Transverse colon (tissue), 4 donors: ENCODE measurements at regions of chr1 and their contacts with region 1.

Region 1: GRCh38 chr1:56831871-56832693 is 12.9 kb upstream of the FYB2 start:
- DNase-seq: peak; percentile 61
- H3K4me3 ChIP-seq: no peak overlapping the region
- H3K27ac ChIP-seq: no peak overlapping the region
- H3K4me1 ChIP-seq: no peaks in the 10 kb centered on the region
- H3K27me3 ChIP-seq: peaks cover 16% of the 10 kb centered on the region
- CTCF ChIP-seq: peak; percentile 87 to 97 (median 97)
- EP300 ChIP-seq: no peak
- POLR2A ChIP-seq: no peak

Region 2: GRCh38 chr1:56798053-56798471 is 34.0 kb before region 1 on chr1:
- in situ Hi-C with region 1: no loop called
- intact Hi-C with region 1: no loop called
- DNase-seq: no peak
- H3K4me3 ChIP-seq: no peak overlapping the region
- H3K27ac ChIP-seq: peak overlapping the region in 2 of 4 donors; percentile 8 to 15
- H3K4me1 ChIP-seq: peaks cover 0 to 19% (median 9%) of the 10 kb centered on the region in 4 donors
- H3K27me3 ChIP-seq: no peaks in the 10 kb centered on the region
- CTCF ChIP-seq: no peak
- EP300 ChIP-seq: no peak
- POLR2A ChIP-seq: no peak

Region 3: DNA sequence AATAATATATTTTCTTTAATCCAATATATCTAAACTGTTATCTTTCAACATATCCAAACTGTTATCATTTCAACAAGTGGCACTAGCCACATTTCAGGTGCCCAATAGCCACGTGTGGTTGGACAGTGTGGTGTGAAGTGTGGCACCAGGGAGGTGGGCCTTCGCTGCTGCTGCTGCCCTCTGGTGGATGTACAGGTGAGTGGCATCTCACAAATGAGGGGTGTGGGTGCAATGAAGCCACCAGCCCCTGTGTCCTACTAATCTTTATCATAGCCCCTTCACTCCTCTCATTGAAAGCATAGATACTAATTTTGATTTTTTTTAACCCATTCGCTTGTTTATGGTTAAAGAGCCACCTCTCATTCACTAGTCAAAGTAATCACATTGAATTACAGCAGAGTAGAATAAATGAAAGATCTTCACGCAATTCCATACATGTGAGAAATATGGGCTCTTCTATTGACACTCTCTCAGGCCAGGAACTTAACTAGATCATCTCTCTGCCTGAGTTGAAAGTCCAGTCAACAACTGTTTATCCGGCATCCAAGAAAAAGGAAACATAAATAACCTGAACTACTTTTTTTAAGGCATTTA is 1215.3 kb after region 1 on chr1:
- in situ Hi-C with region 1: loop called in 2 of 4 experiments (anchors 25 kb)
- intact Hi-C with region 1: loop called (anchors 10 kb)
- DNase-seq: peak; percentile 21
- H3K4me3 ChIP-seq: no peak overlapping the region
- H3K27ac ChIP-seq: no peak overlapping the region
- H3K4me1 ChIP-seq: no peaks in the 10 kb centered on the region
- H3K27me3 ChIP-seq: no peaks in the 10 kb centered on the region
- CTCF ChIP-seq: peak; percentile 47 to 67 (median 50)
- EP300 ChIP-seq: no peak
- POLR2A ChIP-seq: no peak

Region 4: DNA sequence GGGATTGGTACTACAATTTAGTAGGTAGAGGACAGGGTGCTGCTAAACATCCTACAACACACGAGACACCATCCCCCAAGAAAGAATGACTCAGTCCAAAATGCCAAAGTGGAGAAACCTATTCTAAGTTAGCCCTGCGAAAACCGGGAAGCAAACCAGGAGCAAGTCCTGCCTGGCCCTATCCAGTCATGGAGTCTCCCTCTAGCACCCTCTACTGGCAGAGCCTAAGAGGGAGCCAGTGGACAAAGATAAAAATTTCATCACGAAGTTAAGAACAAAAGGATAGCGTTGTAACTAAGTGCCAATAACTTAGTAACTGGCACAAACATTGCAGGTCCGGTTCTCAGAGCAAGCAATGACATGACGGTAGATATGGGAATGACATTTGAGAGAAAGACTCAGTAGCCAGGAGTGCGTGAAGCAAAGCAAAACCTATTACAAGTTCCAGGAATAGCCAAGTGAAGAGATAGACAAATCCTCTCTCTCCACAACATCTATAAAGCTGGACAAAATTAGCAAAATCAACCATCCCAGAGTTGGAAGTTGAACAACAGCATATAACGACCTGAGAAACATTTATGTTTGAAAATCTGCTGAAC is 1331.0 kb after region 1 on chr1:
- in situ Hi-C with region 1: loop called in 3 of 4 experiments (anchors 25 kb)
- intact Hi-C with region 1: no loop called
- DNase-seq: peak; percentile 42
- H3K4me3 ChIP-seq: no peak overlapping the region
- H3K27ac ChIP-seq: no peak overlapping the region
- H3K4me1 ChIP-seq: no peaks in the 10 kb centered on the region
- H3K27me3 ChIP-seq: no peaks in the 10 kb centered on the region
- CTCF ChIP-seq: peak; percentile 54 to 85 (median 72)
- EP300 ChIP-seq: no peak
- POLR2A ChIP-seq: no peak